ENCODE measurements at regions of chr19 and their contacts with region 1.

Region 1: DNA sequence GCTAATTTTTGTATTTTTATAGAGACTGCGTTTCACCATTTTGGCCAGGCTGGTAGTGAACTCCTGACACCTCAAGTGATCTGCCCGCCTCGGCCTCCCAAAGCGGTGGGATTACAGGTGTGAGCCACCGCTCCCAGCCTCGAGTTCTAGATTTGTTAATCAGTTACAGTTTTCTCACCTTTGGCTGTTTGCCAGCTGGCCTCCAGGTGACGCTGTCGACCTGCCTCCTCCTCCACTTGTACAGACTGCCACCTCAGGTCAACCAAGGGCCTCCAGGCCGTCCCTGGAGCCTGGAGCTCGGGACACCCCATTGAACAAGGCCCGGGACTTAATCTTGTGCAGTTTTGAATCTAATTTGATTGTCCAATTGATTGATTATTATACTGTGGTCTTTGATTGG is 45.5 kb downstream of the IER2 start:
- DNase-seq: no peak
- ATAC-seq: no peak
- H3K4me3 ChIP-seq: no peak overlapping the region
- H3K27ac ChIP-seq: no peak overlapping the region
- H3K4me1 ChIP-seq: no peaks in the 10 kb centered on the region
- H3K27me3 ChIP-seq: no peaks in the 10 kb centered on the region

Region 2: GRCh38 chr19:13262450-13262849 is 66.8 kb after region 1 on chr19:
- intact Hi-C with region 1: loop called in 2 of 4 experiments (anchors 5 to 10 kb)
- DNase-seq: no peak
- ATAC-seq: peak; percentile 67 to 75
- H3K4me3 ChIP-seq: no peak overlapping the region
- H3K27ac ChIP-seq: no peak overlapping the region
- H3K4me1 ChIP-seq: no peaks in the 10 kb centered on the region
- H3K27me3 ChIP-seq: no peaks in the 10 kb centered on the region